ENCODE measurements at regions of chr4 and their contacts with region 1.

Region 1: GRCh38 chr4:163554870-163555465 is 60.5 kb downstream of the TMA16 start:
- DNase-seq: no peak
- H3K4me3 Mint-ChIP-seq: no peak overlapping the region
- H3K27ac Mint-ChIP-seq: no peak overlapping the region
- H3K4me1 Mint-ChIP-seq: peaks cover 26% of the 10 kb centered on the region
- H3K27me3 Mint-ChIP-seq: no peaks in the 10 kb centered on the region

Region 2: GRCh38 chr4:163681208-163681821 is 126.3 kb after region 1 on chr4:
- CTCF ChIA-PET with region 1: interaction called, 25 read pairs
- DNase-seq: peak; percentile 37
- H3K4me3 Mint-ChIP-seq: no peak overlapping the region
- H3K27ac Mint-ChIP-seq: peak overlapping the region; percentile 43
- H3K4me1 Mint-ChIP-seq: no peaks in the 10 kb centered on the region
- H3K27me3 Mint-ChIP-seq: no peaks in the 10 kb centered on the region

Region 3: DNA sequence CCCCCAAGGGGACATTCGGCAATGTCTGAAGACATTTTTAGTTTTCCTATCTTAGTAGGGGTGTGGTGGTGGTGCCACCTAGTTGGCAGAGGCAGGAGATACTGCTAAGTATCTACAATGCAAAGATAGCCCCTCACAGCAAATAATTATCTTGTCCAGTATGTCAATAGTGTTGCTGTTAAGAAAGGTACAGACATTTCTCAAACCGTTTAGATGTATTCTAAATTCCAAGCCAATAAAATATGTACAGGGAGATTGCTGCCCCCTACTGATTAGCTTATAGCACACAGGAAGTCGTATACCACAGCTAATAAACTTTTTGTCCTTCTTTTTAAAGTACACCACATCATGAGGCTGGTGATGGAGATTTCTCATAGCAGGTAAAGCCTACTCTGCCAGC is 200.0 kb after region 1 on chr4:
- CTCF ChIA-PET with region 1: interaction called, 13 read pairs
- DNase-seq: no peak
- H3K4me3 Mint-ChIP-seq: no peak overlapping the region
- H3K27ac Mint-ChIP-seq: no peak overlapping the region
- H3K4me1 Mint-ChIP-seq: no peaks in the 10 kb centered on the region
- H3K27me3 Mint-ChIP-seq: no peaks in the 10 kb centered on the region

Region 4: DNA sequence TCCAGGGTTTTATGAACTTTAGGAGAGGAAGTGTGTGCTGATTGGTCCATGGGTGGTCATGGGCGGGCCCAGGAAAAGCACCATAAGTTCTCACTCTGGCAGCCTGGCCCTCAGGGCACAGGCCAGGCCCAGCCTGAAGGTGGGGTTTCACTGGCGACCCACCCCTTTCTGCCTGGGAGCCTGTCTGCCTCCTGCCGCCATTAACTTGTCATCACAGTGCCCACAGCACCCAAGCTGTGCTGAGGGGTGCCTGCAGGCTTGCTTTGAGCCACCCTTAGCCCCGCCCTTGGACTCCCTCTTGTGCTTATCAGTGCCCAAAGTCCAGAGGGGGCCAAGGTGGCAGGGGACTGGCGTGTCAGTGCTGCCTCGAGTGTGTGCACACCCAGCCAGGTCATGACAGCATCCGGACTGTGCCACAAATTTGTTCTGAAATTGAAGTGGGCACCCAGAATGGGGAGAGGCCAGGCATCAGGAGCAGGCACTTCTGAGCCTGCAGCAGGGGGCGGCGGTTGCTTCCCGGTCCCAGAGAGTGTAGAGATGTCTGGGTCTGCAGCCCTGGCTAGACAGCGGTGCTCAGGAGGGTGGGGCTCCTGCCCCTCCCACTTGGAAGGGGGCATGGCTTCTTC is 395.1 kb after region 1 on chr4:
- CTCF ChIA-PET with region 1: no interaction called
- DNase-seq: no peak
- H3K4me3 Mint-ChIP-seq: no peak overlapping the region
- H3K27ac Mint-ChIP-seq: no peak overlapping the region
- H3K4me1 Mint-ChIP-seq: no peaks in the 10 kb centered on the region
- H3K27me3 Mint-ChIP-seq: no peaks in the 10 kb centered on the region